Posterior cingulate gyrus (tissue), 11 donors: ENCODE measurements at regions of chr6 and their contacts with region 1.

Region 1: GRCh38 chr6:157184202-157185020 is 138.9 kb downstream of the TMEM242 start:
- DNase-seq: peak; percentile 54 to 96 (median 76)

Region 2: GRCh38 chr6:156564127-156564806 is 620.1 kb before region 1 on chr6:
- intact Hi-C with region 1: loop called (anchors 2 kb)
- DNase-seq: peak; percentile 67 to 97 (median 84)

Region 3: GRCh38 chr6:157008568-157008967 is 175.8 kb before region 1 on chr6:
- intact Hi-C with region 1: no loop called
- DNase-seq: no peak

Region 4: GRCh38 chr6:157029980-157030690 is 154.3 kb before region 1 on chr6:
- intact Hi-C with region 1: no loop called
- DNase-seq: no peak

Region 5: GRCh38 chr6:157045831-157046454 is 138.5 kb before region 1 on chr6:
- intact Hi-C with region 1: loop called (anchors 5 kb)
- DNase-seq: no peak